Heart left ventricle (tissue), 16 donors: ENCODE measurements at regions of chr1 and their contacts with region 1.

Region 1: DNA sequence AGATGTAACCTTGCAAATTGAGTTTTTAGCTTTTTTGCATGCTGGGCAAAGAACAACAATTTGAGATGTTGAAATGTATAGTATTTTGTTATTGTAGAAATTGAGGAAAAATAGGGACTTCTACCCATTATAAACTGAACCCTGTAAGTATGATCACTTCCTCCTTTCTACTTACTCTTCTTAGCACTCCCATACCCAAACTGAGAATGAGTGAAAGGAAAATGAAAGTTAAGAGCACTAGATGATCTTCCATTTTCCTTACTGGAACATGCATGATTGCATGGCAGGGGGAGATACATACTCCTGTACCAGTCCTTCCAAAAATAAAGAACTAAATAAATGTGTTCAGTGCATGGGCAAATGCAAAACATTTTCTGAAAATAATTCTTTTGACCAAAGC is 107.4 kb upstream of the KIAA1614 start:
- DNase-seq: no peak
- ATAC-seq: no peak
- H3K4me3 ChIP-seq: no peak overlapping the region
- H3K27ac ChIP-seq: no peak overlapping the region
- H3K4me1 ChIP-seq: peaks cover 0 to 11% (median 0%) of the 10 kb centered on the region in 12 donors
- H3K27me3 ChIP-seq: no peaks in the 10 kb centered on the region
- CTCF ChIP-seq: no peak
- POLR2A ChIP-seq: no peak

Region 2: DNA sequence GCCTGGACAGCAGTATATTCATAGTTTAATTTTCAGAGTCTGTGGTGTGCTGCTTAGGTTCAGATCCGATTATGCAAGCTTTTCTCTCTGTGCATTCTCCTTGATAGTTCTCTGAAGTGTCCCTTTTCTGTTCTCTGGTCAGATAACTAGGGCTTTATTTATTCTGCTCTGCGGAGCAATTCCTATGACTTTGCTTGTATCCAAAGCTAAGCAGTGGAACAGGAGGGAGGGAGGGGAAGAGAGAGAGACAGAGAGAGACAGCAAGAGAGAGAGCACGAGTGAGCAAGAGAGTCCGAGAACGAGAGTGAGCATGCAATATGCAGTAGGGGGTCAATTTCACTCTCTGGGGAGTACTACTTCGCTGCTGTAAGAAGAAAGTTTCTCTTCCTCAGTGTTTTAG is 60.2 kb before region 1 on chr1:
- intact Hi-C with region 1: loop called in 1 of 10 experiments (anchors 10 kb)
- DNase-seq: no peak
- ATAC-seq: peak; percentile 37 to 60 (median 42)
- H3K4me3 ChIP-seq: no peak overlapping the region
- H3K27ac ChIP-seq: no peak overlapping the region
- H3K4me1 ChIP-seq: peaks cover 0 to 7% (median 0%) of the 10 kb centered on the region in 12 donors
- H3K27me3 ChIP-seq: no peaks in the 10 kb centered on the region
- CTCF ChIP-seq: no peak
- POLR2A ChIP-seq: no peak

Region 3: GRCh38 chr1:180851995-180852887 is 46.9 kb after region 1 on chr1:
- intact Hi-C with region 1: loop called in 1 of 10 experiments (anchors 10 kb)
- DNase-seq: no peak
- ATAC-seq: no peak
- H3K4me3 ChIP-seq: no peak overlapping the region
- H3K27ac ChIP-seq: no peak overlapping the region
- H3K4me1 ChIP-seq: peaks cover 0 to 28% (median 16%) of the 10 kb centered on the region in 12 donors
- H3K27me3 ChIP-seq: no peaks in the 10 kb centered on the region
- CTCF ChIP-seq: no peak
- POLR2A ChIP-seq: no peak